HCT116 (cell line): ENCODE measurements at regions of chr16 and their contacts with region 1.

Region 1: GRCh38 chr16:56513972-56514371 is 5.9 kb downstream of the BBS2 start:
- DNase-seq: peak; percentile 72
- ATAC-seq: peak; percentile 96
- H3K4me3 ChIP-seq: no peak overlapping the region
- H3K27ac ChIP-seq: no peak overlapping the region
- H3K4me1 ChIP-seq: peaks cover 13 to 14% of the 10 kb centered on the region in 2 experiments
- H3K27me3 ChIP-seq: no peaks in the 10 kb centered on the region
- CTCF ChIP-seq: peak; percentile 76 to 89 (median 83)
- POLR2A ChIP-seq: no peak
- RAD21 ChIP-seq: peak; percentile 80

Region 2: GRCh38 chr16:56600398-56600999 is 86.5 kb after region 1 on chr16:
- CTCF ChIA-PET with region 1: interaction called, 17 read pairs
- POLR2A ChIA-PET with region 1: no interaction called
- RAD21 ChIA-PET with region 1: no interaction called
- intact Hi-C with region 1: loop called (anchors 2 kb)
- DNase-seq: peak; percentile 55
- ATAC-seq: peak; percentile 86
- H3K4me3 ChIP-seq: no peak overlapping the region
- H3K27ac ChIP-seq: no peak overlapping the region
- H3K4me1 ChIP-seq: peaks cover 7 to 28% of the 10 kb centered on the region in 2 experiments; a peak in 3 of 4 replicates
- H3K27me3 ChIP-seq: no peaks in the 10 kb centered on the region
- CTCF ChIP-seq: peak in 2 of 3 experiments; percentile 80 to 81; a peak in 4 of 6 replicates
- POLR2A ChIP-seq: no peak
- RAD21 ChIP-seq: no peak